Activated CD4-positive, alpha-beta T cell treated with anti-CD3 and anti-CD28 coated beads, Interleukin-2, amount 10 ng/mL, durations not matched to agents 24 days and 14 days (primary cell): ENCODE measurements at regions of chr10 and their contacts with region 1.

Region 1: GRCh38 chr10:50990568-50991185 is 83.6 kb upstream of the PRKG1 start:
- DNase-seq: no peak
- H3K4me3 Mint-ChIP-seq: peak overlapping the region; percentile 67
- H3K27ac Mint-ChIP-seq: no peak overlapping the region
- H3K4me1 Mint-ChIP-seq: peaks cover 6% of the 10 kb centered on the region
- H3K27me3 Mint-ChIP-seq: peaks cover 42% of the 10 kb centered on the region

Region 2: DNA sequence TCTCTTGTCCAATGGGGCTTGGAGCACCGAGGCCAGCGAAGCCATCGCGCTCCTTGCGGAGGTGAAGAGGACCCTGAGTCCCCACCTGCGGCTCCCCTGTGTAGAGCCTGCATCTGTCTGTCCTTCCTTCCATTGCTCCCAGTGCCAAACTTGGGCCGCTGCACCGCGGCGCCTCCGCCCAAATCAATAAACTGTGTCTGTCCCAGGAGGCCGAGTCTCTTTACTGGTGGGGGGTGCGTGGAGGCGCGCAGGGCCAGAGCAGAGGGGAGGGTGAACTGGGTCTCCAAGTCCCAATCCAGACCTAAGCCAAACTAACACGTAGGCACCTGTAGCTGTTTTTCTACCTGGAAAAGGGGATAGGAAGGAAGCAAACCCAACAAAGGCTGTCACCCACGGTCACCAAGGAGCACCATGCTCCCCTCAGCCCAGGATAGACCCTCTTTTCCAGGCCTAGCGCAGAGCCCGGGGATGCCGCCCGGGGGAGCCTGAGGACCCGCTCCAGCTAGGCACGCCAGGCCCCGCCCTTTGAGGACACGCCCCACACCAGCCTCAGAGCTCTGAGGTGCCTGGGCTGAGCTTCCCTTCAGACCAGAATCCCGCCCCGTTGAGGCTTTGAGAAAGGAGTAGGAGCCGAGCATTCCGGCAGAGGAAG is 1378.0 kb before region 1 on chr10:
- intact Hi-C with region 1: loop called (anchors 10 kb)
- DNase-seq: no peak
- H3K4me3 Mint-ChIP-seq: peak overlapping the region; percentile 41
- H3K27ac Mint-ChIP-seq: peak overlapping the region; percentile 48
- H3K4me1 Mint-ChIP-seq: peaks cover 2% of the 10 kb centered on the region
- H3K27me3 Mint-ChIP-seq: peaks cover 62% of the 10 kb centered on the region

Region 3: DNA sequence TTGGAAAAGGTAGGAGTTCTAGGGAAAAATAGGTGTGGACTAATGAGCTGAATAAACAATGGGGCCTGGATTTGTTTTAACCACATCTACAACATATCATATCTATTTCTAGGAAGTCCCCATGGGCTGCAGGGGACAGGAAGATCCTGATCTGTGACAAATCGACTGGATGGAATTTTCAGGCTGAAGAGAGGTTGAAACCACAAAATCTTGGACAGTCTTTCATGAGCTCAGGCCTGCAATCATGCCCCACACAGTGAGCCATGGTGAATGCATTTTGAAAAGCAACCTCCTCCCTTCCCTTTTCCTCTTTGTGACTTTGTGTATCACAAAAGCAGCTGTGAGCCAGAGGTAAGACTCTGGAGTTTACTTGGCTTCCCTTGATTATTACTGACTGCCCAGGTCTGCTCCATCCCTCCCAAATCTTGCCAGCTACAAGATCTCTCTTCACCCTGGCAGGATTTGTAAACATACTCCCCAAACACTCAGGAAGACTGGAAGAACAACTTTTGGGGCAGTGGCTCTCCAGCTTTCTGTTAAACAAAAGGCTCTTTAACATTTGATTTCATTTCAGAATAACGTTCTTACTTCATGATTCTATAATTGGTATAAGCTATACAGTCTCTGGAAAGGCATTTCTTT is 184.6 kb before region 1 on chr10:
- intact Hi-C with region 1: no loop called
- DNase-seq: no peak
- H3K4me3 Mint-ChIP-seq: no peak overlapping the region
- H3K27ac Mint-ChIP-seq: no peak overlapping the region
- H3K4me1 Mint-ChIP-seq: no peaks in the 10 kb centered on the region
- H3K27me3 Mint-ChIP-seq: peaks cover 21% of the 10 kb centered on the region

Region 4: GRCh38 chr10:51344371-51344770 is 353.7 kb after region 1 on chr10:
- intact Hi-C with region 1: no loop called
- DNase-seq: no peak
- H3K4me3 Mint-ChIP-seq: no peak overlapping the region
- H3K27ac Mint-ChIP-seq: no peak overlapping the region
- H3K4me1 Mint-ChIP-seq: peaks cover 3% of the 10 kb centered on the region
- H3K27me3 Mint-ChIP-seq: no peaks in the 10 kb centered on the region

Region 5: DNA sequence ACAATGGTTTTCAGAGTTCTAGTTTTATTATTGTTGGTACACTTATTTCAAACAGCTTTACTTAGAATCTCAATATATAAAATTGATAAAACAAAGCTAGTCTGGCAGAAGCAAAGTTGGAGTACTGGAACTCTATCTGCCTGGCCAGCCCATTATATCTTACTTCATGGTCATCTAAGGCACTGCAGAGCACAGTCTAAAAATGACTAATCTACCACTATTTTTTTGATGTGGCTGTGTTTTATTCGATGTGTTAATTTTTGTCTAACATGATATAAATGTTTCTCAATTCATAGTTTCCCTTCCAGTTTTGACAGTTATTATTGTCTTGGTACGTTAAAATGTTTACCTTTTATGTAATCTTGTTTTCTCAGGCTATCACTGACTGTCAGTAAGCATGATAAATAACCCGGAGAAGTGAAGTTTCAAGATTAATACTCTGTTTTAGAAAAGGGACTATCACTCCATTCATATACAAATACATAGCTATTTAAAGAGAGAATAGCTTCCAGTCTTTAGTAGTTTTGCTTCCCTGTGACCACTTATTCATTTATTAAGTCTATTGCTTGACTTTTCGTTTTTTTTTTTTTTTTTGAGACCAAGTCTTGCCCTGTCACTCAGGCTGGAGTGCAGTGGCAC is 769.3 kb after region 1 on chr10:
- intact Hi-C with region 1: no loop called
- DNase-seq: no peak
- H3K4me3 Mint-ChIP-seq: no peak overlapping the region
- H3K27ac Mint-ChIP-seq: no peak overlapping the region
- H3K4me1 Mint-ChIP-seq: no peaks in the 10 kb centered on the region
- H3K27me3 Mint-ChIP-seq: peaks cover 5% of the 10 kb centered on the region